Esophagus muscularis mucosa (tissue), 4 donors: ENCODE measurements at regions of chr13 and their contacts with region 1.

Region 1: DNA sequence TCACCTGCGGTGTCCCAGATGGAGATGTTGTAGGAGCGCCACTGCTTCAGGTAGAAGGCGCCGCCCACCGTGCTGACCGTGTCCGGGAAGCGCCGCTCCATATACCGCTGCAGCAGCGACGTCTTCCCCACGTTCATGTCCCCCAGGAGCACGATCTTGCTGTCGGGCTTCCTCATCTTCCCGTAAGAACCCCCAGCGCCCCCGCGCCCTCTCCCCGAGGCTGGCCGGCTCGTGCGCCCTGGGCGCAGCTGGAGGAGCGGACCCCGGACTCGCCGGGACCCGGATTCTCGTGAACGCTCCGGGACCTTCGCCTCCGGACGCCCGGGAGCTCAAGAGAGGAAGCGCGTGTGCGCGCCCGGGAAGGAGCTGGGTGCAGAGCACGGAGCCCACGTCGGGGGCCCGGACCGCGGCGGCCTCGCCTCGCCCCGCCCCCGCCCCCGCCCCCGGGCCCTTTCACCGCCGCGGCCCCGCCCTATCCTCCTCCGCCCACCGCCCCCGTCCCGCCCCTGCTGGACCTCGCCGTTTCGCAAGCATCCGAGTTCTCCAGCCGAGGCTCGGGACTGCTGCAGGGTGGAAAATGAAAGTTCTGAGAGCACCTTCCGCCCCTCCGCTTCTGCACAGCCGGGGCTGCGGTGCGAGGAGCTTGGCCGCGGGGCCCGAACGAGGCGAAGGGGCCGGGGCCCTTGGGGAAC is at the start of gene RAB20:
- DNase-seq: peak; percentile 95
- H3K4me3 ChIP-seq: peak within 1 kb of the TSS; percentile 82 to 96 (median 93)
- H3K27ac ChIP-seq: peak within 1 kb of the TSS; percentile 93 to 96 (median 94)
- H3K4me1 ChIP-seq: peaks cover 27 to 42% (median 39%) of the 10 kb centered on the region in 4 donors
- H3K27me3 ChIP-seq: no peaks in the 10 kb centered on the region
- CTCF ChIP-seq: no peak
- EP300 ChIP-seq: no peak
- POLR2A ChIP-seq: peak; percentile 41
- total RNA-seq, gene RAB20: 10.9 to 40.6 (median 15.4) TPM

Region 2: GRCh38 chr13:110455941-110456340 is 105.5 kb before region 1 on chr13:
- intact Hi-C with region 1: loop called (anchors 2 kb)
- DNase-seq: no peak
- H3K4me3 ChIP-seq: no peak overlapping the region
- H3K27ac ChIP-seq: peak overlapping the region; percentile 49 to 83 (median 52)
- H3K4me1 ChIP-seq: peaks cover 0 to 27% (median 19%) of the 10 kb centered on the region in 4 donors
- H3K27me3 ChIP-seq: no peaks in the 10 kb centered on the region
- CTCF ChIP-seq: peak; percentile 82 to 87 (median 85)
- EP300 ChIP-seq: no peak
- POLR2A ChIP-seq: no peak

Region 3: DNA sequence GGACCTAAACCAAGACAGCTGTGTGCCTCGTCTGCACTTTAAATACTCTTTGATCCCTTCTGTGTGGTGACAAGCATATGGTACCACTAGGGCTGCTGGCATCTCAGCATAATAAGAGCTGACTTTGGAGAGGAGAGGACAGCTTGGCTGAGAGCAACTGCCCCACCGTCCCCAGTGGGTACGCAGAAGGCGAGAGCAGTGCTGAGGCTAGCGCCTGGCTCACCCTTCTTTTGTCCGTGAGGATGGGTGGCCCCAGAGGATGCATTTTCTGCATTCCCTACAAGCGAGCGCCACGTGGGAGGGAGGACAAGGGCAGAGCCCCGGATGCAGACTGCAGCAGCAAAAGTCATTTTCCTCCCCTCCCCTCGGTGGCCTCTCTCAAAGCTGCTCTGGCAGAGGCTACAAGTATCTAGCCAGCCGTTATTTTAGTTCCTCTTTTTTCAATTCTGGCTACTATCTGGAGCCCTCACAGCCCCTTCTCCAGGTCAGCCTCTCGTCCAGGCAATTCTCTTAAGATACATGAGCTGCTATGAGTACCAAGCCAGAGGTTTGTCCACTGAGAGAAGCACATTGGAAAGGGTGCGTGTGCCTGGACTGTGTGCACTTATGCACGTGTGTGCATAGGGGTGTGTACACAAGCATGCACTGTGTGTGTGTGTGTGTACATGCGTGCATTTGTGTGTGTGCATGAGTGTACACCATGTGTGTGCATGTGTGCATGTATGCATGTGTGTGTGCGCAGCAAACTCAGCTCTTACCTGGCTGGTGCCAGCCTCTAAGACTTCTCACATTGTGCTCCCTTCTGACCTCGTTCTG is 51.3 kb before region 1 on chr13:
- intact Hi-C with region 1: loop called (anchors 5 kb)
- DNase-seq: no peak
- H3K4me3 ChIP-seq: no peak overlapping the region
- H3K27ac ChIP-seq: peak overlapping the region; percentile 21 to 79 (median 66)
- H3K4me1 ChIP-seq: peaks cover 41 to 56% (median 51%) of the 10 kb centered on the region in 4 donors
- H3K27me3 ChIP-seq: no peaks in the 10 kb centered on the region
- CTCF ChIP-seq: no peak
- EP300 ChIP-seq: no peak
- POLR2A ChIP-seq: no peak